ENCODE measurements at regions of chr5 and their contacts with region 1.

Region 1: DNA sequence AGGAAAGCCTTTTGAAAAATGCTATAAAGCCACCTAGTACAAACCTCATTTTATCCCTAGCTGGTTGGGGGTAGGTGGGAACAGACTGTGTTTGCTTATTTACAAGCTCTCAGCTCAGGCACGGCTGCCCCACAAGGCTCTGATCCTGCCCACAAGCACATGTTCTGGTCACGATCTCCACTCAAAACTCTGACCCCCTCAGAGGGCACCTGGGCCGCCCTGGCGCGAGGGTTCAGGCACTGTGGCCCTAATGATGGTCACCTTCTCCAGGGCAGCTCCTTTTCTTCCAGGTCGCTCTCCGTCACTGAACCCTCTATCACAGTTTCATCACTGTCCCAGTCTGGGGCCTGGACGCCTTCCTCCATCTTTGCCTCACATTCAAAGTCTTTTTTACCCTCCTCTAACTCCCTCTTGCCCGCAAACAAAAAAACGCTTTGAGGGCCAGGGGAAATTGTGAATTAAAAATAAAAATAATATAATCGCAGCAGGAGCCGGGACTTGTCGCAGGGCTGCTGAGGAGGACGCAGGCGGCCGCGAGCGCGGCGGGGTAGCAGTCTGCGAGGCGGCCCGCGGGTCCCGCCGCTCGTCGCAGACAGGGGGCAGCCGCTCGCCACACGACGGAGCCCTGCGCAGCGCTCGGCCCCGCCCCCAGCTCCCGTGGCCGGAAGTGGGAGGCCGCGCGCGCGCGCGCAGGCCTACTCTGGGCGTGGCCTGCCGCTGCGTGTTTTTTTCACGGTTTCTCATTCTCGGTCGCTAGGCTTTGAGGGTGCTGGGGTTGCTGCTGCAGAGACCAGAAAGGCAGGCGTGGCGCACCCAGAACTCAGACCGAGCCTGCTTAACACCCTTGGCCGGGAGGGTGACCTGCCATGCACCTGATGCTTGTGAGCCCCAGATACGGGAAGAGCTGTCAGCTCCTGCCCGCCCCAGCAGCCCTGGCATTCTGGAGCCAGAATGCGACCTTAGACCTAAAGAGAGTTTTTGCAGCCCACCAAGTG is at the start of gene ANKRD31:
- DNase-seq: peak; percentile 86
- H3K4me3 Mint-ChIP-seq: peak within 1 kb of the TSS; percentile 90
- H3K27ac Mint-ChIP-seq: peak within 1 kb of the TSS; percentile 97
- H3K4me1 Mint-ChIP-seq: peaks cover 15% of the 10 kb centered on the region
- H3K27me3 Mint-ChIP-seq: peaks cover 6% of the 10 kb centered on the region
- total RNA-seq, gene ANKRD31: 0.36 and 0.37 TPM in 2 replicates

Region 2: GRCh38 chr5:74622122-74622521 is 614.5 kb before region 1 on chr5:
- intact Hi-C with region 1: no loop called
- DNase-seq: no peak
- H3K4me3 Mint-ChIP-seq: no peak overlapping the region
- H3K27ac Mint-ChIP-seq: no peak overlapping the region
- H3K4me1 Mint-ChIP-seq: peaks cover 12% of the 10 kb centered on the region
- H3K27me3 Mint-ChIP-seq: peaks cover 29% of the 10 kb centered on the region

Region 3: GRCh38 chr5:74851684-74852353 is 384.8 kb before region 1 on chr5:
- intact Hi-C with region 1: loop called (anchors 5 kb)
- DNase-seq: no peak
- H3K4me3 Mint-ChIP-seq: peak overlapping the region; percentile 73
- H3K27ac Mint-ChIP-seq: peak overlapping the region; percentile 75
- H3K4me1 Mint-ChIP-seq: peaks cover 20% of the 10 kb centered on the region
- H3K27me3 Mint-ChIP-seq: no peaks in the 10 kb centered on the region

Region 4: GRCh38 chr5:75320341-75320740 is 83.7 kb after region 1 on chr5:
- intact Hi-C with region 1: loop called (anchors 5 kb)
- DNase-seq: no peak
- H3K4me3 Mint-ChIP-seq: no peak overlapping the region
- H3K27ac Mint-ChIP-seq: no peak overlapping the region
- H3K4me1 Mint-ChIP-seq: peaks cover 13% of the 10 kb centered on the region
- H3K27me3 Mint-ChIP-seq: peaks cover 2% of the 10 kb centered on the region

Region 5: DNA sequence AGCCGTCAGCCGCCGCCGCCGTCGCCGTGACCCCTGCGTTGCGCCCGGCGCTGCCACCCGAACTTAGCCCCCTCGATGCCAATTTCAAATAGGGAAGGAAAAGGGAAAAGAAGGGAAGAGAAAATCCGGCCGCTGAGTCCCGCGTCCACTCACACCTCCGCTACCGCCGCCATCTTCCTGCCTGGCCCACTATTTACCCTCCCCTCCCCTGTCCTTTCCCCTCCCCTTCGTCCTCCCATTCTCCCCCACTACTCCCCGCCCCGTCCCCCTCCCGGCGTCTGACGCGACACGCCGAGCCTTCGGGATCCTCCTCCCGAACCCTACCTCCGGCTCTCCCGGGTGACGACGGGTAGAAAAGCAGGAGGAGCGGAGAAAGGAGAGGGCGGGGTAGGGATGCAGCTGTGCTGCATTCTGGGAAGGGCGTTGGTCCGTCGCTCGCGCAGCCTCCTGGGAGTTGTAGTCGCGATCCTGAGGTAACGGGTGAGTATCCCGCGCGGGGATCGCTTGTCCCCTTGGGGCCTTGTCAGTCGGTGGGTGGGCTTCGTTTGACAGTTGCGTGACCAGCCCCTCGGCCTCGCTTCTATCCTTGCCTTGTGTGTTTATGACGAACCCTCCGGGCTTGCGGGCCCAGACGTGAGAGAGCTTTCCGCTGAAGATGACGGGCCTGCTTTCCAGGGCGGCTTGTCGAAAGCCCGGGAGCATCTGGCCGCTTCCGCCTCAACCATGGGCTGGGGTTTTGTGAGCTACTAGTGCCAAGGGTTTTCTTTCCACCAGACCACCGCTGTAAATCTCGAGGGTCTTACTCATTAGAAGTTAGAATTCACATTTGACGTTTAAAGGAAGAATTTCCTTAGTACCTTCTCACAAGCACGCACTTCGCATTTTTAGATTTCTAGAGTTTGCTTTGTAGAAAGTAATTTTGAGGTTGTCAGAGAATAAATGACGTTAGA is 275.1 kb after region 1 on chr5 and contains the starts of genes CERT1 and POLK:
- intact Hi-C with region 1: loop called (anchors 1 kb)
- DNase-seq: peak; percentile 96
- H3K4me3 Mint-ChIP-seq: peak within 1 kb of the TSS; percentile 99
- H3K27ac Mint-ChIP-seq: peak within 1 kb of the TSS; percentile 93
- H3K4me1 Mint-ChIP-seq: peaks cover 62% of the 10 kb centered on the region
- H3K27me3 Mint-ChIP-seq: no peaks in the 10 kb centered on the region
- total RNA-seq, gene CERT1: 41.0 and 43.4 TPM in 2 replicates
- total RNA-seq, gene POLK: 38.0 and 40.4 TPM in 2 replicates

Region 6: DNA sequence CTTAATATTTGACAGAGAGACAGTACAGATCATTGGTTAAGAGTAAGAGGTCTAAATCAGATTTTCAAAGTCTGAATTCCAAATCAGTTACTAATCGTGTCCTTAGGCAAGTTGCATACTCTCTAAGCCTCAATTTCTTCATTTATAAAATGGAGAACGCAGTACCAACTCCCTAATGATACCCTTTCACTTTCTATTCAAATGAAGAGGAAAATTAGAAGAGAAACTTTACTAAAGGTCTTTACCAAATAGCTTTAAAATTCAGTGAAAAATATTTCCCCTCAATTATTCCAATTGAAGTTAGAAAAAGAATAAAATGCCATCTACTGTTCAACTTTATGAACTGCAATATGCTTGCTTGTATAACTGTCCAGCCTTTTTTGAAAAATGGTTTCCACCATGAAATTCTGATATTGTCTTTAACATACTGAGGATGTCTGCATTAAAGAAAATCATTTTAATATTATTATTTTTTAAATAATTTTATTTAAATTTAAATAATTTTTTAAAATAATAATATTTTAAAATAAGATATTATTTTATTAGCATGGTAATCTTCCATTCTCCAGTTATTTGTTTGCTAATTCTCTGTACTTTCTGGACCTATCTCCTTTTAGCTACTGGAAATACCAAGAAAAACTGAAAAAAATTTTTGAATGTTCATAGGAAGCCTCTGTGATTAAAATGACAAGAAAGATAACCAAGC is 444.7 kb after region 1 on chr5:
- intact Hi-C with region 1: loop called (anchors 1 kb)
- DNase-seq: no peak
- H3K4me3 Mint-ChIP-seq: no peak overlapping the region
- H3K27ac Mint-ChIP-seq: no peak overlapping the region
- H3K4me1 Mint-ChIP-seq: peaks cover 11% of the 10 kb centered on the region
- H3K27me3 Mint-ChIP-seq: no peaks in the 10 kb centered on the region

Region 7: DNA sequence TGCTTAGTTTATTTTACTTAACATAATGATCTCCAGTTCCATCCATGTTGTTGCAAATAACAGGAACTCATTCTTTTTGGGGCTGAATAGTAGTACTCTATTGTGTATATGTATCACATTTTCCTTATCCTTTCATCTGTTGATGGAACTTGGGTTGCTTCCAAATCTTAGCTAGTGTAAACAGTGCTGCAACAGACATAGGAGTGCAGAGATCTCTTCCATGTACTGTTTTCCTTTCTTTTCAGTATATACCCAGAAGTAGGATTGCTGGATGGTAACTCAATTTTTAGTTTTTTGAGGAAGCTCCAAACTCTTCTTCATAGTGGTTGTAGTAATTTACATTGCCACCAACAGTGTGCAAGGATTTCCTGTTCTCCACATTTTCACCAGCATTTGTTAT is 619.4 kb after region 1 on chr5:
- intact Hi-C with region 1: no loop called
- DNase-seq: no peak
- H3K4me3 Mint-ChIP-seq: no peak overlapping the region
- H3K27ac Mint-ChIP-seq: no peak overlapping the region
- H3K4me1 Mint-ChIP-seq: no peaks in the 10 kb centered on the region
- H3K27me3 Mint-ChIP-seq: peaks cover 2% of the 10 kb centered on the region